Activated CD4-positive, alpha-beta T cell treated with anti-CD3 and anti-CD28 coated beads for 36 hours (primary cell): ENCODE measurements at regions of chr15 and their contacts with region 1.

Region 1: DNA sequence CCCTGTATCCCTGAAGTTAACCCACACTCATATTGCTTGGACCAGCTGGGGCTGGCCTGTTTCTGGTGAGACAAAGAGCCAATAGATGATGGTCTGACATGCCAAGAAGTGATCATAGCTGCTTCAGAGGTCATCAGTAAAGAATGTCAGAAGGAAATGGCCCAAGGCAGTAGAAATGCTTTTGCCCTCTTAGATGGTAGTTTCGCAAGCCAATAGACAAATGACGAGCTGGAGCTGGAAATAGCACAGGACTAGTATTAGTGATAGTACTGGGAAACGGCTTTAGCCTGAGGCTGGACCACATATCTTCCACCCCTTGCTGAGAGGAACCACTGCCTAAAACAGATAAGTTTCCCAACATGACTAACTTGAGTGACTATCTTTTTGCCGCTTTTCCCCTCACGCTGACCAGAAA is 176.1 kb upstream of the THBS1 start:
- DNase-seq: no peak
- ATAC-seq: no peak
- H3K4me3 Mint-ChIP-seq: no peak overlapping the region
- H3K27ac Mint-ChIP-seq: no peak overlapping the region
- H3K4me1 Mint-ChIP-seq: no peaks in the 10 kb centered on the region
- H3K27me3 Mint-ChIP-seq: peaks cover 10% of the 10 kb centered on the region

Region 2: GRCh38 chr15:39344662-39345141 is 60.1 kb before region 1 on chr15:
- CTCF ChIA-PET with region 1: no interaction called
- POLR2A ChIA-PET with region 1: no interaction called
- intact Hi-C with region 1: loop called in 1 of 2 experiments (anchors 10 kb)
- DNase-seq: no peak
- ATAC-seq: no peak
- H3K4me3 Mint-ChIP-seq: no peak overlapping the region
- H3K27ac Mint-ChIP-seq: no peak overlapping the region
- H3K4me1 Mint-ChIP-seq: no peaks in the 10 kb centered on the region
- H3K27me3 Mint-ChIP-seq: no peaks in the 10 kb centered on the region

Region 3: GRCh38 chr15:39517122-39517855 is 112.5 kb after region 1 on chr15:
- CTCF ChIA-PET with region 1: no interaction called
- POLR2A ChIA-PET with region 1: no interaction called
- intact Hi-C with region 1: loop called in 1 of 2 experiments (anchors 5 kb)
- DNase-seq: no peak
- ATAC-seq: no peak
- H3K4me3 Mint-ChIP-seq: no peak overlapping the region
- H3K27ac Mint-ChIP-seq: no peak overlapping the region
- H3K4me1 Mint-ChIP-seq: no peaks in the 10 kb centered on the region
- H3K27me3 Mint-ChIP-seq: peaks cover 14% of the 10 kb centered on the region